A549 (cell line): ENCODE measurements at regions of chr9 and their contacts with region 1.

Region 1: GRCh38 chr9:130243015-130243734 is 22.4 kb upstream of the HMCN2 start:
- DNase-seq: peak; percentile 79 to 83
- ATAC-seq: peak; percentile 55 to 82
- H3K4me3 ChIP-seq: peak overlapping the region; percentile 40
- H3K27ac ChIP-seq: peak overlapping the region; percentile 60 to 80
- H3K4me1 ChIP-seq: peaks cover 17% of the 10 kb centered on the region
- CTCF ChIP-seq: peak; percentile 77
- EP300 ChIP-seq: no peak
- POLR2A ChIP-seq: no peak
- RAD21 ChIP-seq: peak; percentile 56 to 65

Region 2: GRCh38 chr9:130254752-130255630 is 11.8 kb after region 1 on chr9:
- CTCF ChIA-PET with region 1: interaction called, 46 read pairs
- POLR2A ChIA-PET with region 1: no interaction called
- DNase-seq: no peak
- ATAC-seq: no peak
- H3K4me3 ChIP-seq: no peak overlapping the region
- H3K27ac ChIP-seq: no peak overlapping the region
- H3K4me1 ChIP-seq: no peaks in the 10 kb centered on the region
- CTCF ChIP-seq: no peak
- EP300 ChIP-seq: no peak
- POLR2A ChIP-seq: no peak
- RAD21 ChIP-seq: no peak

Region 3: GRCh38 chr9:130271473-130271872 is 28.3 kb after region 1 on chr9:
- CTCF ChIA-PET with region 1: interaction called, 18 read pairs
- POLR2A ChIA-PET with region 1: no interaction called
- DNase-seq: no peak
- ATAC-seq: no peak
- H3K4me3 ChIP-seq: no peak overlapping the region
- H3K27ac ChIP-seq: no peak overlapping the region
- H3K4me1 ChIP-seq: no peaks in the 10 kb centered on the region
- CTCF ChIP-seq: no peak
- EP300 ChIP-seq: no peak
- POLR2A ChIP-seq: no peak
- RAD21 ChIP-seq: no peak

Region 4: DNA sequence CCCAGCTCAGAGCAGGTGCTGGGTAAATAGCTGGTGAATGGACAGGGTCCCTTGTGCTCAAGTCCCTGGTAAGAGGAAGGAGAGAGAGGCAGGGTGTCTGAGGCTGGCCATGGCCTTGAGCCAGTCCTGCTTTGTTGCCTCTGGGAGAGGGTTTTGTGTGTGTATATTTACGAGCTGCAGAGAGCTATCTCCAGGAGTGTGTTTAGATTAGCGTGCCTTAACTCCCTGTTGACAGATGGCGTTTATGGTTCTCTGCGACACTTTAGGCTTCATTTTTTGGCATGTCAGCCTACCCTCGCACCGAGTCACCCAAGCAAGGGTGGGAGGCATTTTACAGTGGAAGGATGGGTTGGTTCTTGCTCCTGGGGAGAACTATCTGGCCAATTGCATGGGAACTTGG is 44.6 kb after region 1 on chr9:
- CTCF ChIA-PET with region 1: interaction called, 15 read pairs
- POLR2A ChIA-PET with region 1: no interaction called
- DNase-seq: no peak
- ATAC-seq: no peak; a peak in 1 of 6 replicates
- H3K4me3 ChIP-seq: no peak overlapping the region
- H3K27ac ChIP-seq: no peak overlapping the region
- H3K4me1 ChIP-seq: no peaks in the 10 kb centered on the region
- CTCF ChIP-seq: no peak
- EP300 ChIP-seq: no peak
- POLR2A ChIP-seq: no peak
- RAD21 ChIP-seq: no peak